Activated CD4-positive, alpha-beta memory T cell treated with anti-CD3 and anti-CD28 coated beads for 36 hours (primary cell): ENCODE measurements at regions of chrX and their contacts with region 1.

Region 1: DNA sequence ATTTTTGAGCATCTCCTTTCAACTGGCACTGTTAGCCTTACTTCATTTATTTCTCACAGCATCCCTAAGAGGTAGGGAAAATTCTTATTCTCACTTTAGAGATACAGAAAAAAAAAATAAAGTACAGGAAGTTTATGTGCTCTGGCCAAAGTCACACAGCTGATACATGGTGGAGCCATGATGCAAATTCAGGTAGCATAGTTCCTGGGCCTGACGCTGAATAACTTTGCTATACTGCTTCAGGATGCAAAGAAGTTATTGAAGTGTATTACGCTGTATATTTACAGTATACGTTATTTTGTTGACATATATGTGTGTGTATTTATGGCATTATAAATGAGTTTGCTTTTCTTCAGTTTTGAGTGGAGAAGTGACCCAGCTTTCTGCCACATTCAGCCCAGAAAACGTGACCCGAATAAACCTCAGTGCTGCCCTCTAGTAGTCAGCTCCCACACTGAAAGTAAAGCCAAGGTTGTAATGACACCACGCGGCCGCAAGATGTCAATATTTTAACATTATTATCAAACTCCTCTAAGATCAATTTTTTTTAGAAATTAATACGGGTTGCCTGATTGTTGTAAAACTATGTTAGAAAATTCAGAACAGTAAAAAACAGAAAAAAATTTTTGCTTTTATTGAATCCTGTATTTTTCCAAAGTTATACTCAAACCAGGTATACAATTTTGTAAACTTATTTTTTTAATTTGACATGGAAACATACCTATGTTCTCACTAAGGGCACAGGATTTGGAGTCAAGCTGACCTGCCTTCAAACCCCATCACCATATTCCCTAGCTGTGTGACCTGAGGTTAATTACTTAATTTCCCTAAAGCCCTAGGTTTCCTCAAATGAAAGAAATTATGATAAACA is 3.8 kb upstream of the GUCY2F start:
- DNase-seq: peak; percentile 64
- H3K4me3 Mint-ChIP-seq: no peak overlapping the region
- H3K27ac Mint-ChIP-seq: no peak overlapping the region
- H3K4me1 Mint-ChIP-seq: no peaks in the 10 kb centered on the region
- H3K27me3 Mint-ChIP-seq: peaks cover 3% of the 10 kb centered on the region

Region 2: GRCh38 chrX:109475174-109475891 is 10.4 kb before region 1 on chrX:
- CTCF ChIA-PET with region 1: interaction called, 14 read pairs
- POLR2A ChIA-PET with region 1: no interaction called
- intact Hi-C with region 1: no loop called
- DNase-seq: peak; percentile 10
- H3K4me3 Mint-ChIP-seq: no peak overlapping the region
- H3K27ac Mint-ChIP-seq: no peak overlapping the region
- H3K4me1 Mint-ChIP-seq: peaks cover 6% of the 10 kb centered on the region
- H3K27me3 Mint-ChIP-seq: no peaks in the 10 kb centered on the region

Region 3: DNA sequence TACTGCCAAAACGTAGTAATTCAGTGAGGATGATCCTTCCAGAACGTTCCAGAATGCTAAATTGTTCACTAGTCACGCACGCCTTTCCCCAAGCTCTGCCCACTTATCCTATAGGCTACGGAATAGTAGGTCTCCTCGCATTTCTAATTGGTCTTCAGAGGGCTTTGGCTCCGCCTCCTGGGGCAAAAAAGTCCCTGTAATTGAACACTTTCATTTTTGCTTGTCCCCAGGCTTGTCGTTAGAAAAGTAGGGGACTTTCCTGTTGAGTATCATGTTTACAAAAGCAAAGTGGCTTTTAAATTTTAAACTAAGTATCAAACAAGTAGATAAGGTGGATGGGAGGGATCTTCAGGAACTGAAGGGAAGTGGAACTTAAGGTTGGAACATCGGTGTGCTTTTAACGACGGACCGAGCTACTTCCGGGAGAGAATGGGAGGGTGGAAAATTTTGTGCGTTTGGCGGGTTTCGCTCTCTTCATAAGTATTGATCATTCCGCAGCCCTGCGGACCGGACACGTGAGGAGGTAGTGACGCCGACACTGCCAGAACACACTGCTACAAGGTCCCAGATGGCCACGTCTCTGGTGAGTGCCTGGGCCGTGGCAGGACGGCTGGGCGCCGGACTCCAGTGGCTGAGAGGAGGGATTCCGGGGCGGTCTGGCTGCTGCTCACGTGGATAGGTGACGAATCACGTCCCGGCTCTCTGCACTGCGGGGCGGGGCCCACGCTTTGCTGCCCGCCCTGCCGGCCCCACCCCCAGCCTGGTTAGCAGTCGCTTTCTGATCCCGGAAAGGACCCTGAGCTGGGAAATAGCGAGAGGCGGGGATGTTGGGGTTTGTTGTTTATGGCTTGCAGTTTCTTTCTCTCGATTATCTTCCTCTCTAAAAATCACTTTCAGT is 51.0 kb after region 1 on chrX and contains the start of gene NXT2:
- CTCF ChIA-PET with region 1: interaction called, 5 read pairs
- POLR2A ChIA-PET with region 1: no interaction called
- intact Hi-C with region 1: loop called (anchors 5 kb)
- DNase-seq: peak; percentile 90
- H3K4me3 Mint-ChIP-seq: peak within 1 kb of the TSS; percentile 90
- H3K27ac Mint-ChIP-seq: peak within 1 kb of the TSS; percentile 97
- H3K4me1 Mint-ChIP-seq: peaks cover 12% of the 10 kb centered on the region
- H3K27me3 Mint-ChIP-seq: peaks cover 6% of the 10 kb centered on the region
- total RNA-seq, gene NXT2: 12.6 to 13.9 TPM

Region 4: DNA sequence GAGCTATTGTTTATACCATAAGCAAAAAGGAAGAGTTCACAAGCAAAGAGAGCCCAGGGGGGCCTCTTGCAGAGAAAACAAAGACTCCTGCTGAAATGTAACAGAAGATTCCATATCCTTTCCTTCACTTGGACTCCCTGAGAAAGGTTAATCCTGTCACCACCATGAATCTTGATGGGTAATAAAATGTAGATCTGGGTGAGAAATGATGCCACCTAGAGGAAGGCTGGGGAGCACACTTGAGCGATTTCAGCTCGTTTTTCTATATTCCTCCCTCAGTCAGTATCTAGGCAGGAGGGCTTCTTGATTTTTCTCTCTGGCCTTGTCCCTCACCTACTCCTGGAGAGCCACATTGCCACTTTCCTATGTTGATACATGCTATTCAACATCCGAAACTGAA is 149.5 kb after region 1 on chrX:
- CTCF ChIA-PET with region 1: interaction called, 55 read pairs
- POLR2A ChIA-PET with region 1: no interaction called
- intact Hi-C with region 1: loop called (anchors 1 kb)
- DNase-seq: no peak
- H3K4me3 Mint-ChIP-seq: no peak overlapping the region
- H3K27ac Mint-ChIP-seq: no peak overlapping the region
- H3K4me1 Mint-ChIP-seq: no peaks in the 10 kb centered on the region
- H3K27me3 Mint-ChIP-seq: no peaks in the 10 kb centered on the region

Region 5: DNA sequence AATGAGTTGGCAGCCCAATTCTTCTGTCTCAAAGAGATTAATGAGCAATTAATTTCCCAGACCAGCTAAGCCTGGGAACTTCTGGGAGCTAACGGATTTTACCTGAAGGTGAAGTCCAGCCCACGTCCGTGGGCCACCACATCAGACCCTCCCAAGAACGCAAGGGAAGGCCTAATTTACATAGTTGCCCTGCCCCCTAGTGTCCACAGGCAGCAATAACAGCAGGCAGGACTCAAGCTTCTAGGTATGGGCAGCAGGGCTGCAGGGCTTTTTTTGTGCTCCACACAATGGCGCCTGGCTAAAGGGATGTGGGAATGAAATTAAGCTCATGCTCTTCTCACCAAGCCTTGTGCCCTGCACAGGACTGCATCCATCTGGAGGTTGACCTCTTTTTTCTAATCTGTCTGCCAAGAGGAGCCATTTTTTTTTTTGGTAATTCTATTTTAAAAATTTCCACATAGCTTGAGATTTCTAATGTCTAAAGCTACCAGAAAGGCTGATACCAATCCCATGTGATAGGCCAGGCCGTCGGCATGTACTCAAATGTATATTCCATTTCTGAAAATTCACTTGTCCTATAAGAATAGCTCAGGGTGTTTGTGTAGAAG is 405.3 kb after region 1 on chrX:
- CTCF ChIA-PET with region 1: interaction called, 40 read pairs
- POLR2A ChIA-PET with region 1: no interaction called
- intact Hi-C with region 1: loop called (anchors 2 kb)
- DNase-seq: peak; percentile 52
- H3K4me3 Mint-ChIP-seq: no peak overlapping the region
- H3K27ac Mint-ChIP-seq: no peak overlapping the region
- H3K4me1 Mint-ChIP-seq: no peaks in the 10 kb centered on the region
- H3K27me3 Mint-ChIP-seq: no peaks in the 10 kb centered on the region